Tibial artery (tissue), 4 donors: ENCODE measurements at regions of chr10 and their contacts with region 1.

Region 1: GRCh38 chr10:987870-988666 is at the start of gene GTPBP4:
- DNase-seq: peak; percentile 98
- H3K4me3 ChIP-seq: peak within 1 kb of the TSS; percentile 80 to 87
- H3K27ac ChIP-seq: peak within 1 kb of the TSS; percentile 81 to 93
- H3K4me1 ChIP-seq: peaks cover 0 to 29% (median 21%) of the 10 kb centered on the region in 4 donors
- H3K27me3 ChIP-seq: no peaks in the 10 kb centered on the region
- CTCF ChIP-seq: no peak

Region 2: GRCh38 chr10:938990-939678 is 48.9 kb before region 1 on chr10:
- intact Hi-C with region 1: no loop called
- DNase-seq: no peak
- H3K4me3 ChIP-seq: no peak overlapping the region
- H3K27ac ChIP-seq: no peak overlapping the region
- H3K4me1 ChIP-seq: no peaks in the 10 kb centered on the region
- H3K27me3 ChIP-seq: no peaks in the 10 kb centered on the region
- CTCF ChIP-seq: no peak

Region 3: GRCh38 chr10:964321-964987 is 23.6 kb before region 1 on chr10:
- intact Hi-C with region 1: no loop called
- DNase-seq: no peak
- H3K4me3 ChIP-seq: no peak overlapping the region
- H3K27ac ChIP-seq: no peak overlapping the region
- H3K4me1 ChIP-seq: no peaks in the 10 kb centered on the region
- H3K27me3 ChIP-seq: peaks cover 0 to 5% of the 10 kb centered on the region in 2 donors
- CTCF ChIP-seq: no peak

Region 4: DNA sequence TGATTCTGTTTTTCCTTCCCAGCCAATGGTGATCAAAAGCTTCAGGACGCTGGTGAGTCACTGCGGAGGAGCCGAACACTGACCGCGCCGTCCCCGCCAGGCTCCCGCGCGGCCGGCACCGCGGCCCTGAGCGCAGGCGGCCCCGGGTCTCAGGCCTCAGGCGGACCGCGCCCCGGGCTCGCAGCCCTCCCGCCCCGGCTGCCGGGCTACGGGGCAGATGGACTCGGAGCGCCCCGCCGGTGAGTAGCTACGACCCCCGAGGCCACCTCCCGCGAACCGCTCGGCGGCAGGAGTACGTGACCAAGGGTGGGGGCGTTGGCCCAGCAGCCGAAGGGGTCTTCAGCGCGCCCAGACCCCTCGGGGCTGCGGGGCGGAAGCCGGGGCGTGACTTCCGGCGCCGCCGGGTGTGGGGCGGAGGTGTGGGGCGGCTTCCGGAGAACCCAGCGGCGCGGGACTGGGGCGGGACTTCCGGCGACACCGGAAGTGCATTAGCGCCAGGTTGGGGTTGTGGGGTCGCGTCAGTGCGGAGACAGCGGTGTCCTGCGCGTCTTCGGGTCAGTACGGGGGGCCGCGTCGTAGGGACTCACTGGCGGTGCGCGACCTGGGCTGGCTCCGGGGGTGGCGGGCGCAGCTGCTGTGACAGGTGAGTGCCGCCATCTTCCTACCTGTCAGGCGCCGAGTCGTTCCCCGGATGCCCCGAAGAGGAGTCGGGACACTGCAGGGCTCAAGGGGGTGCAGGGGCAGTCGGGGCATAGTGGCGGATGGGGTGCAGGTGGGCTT is 68.4 kb after region 1 on chr10 and contains the start of gene WDR37:
- intact Hi-C with region 1: loop called (anchors 2 kb)
- DNase-seq: peak; percentile 82 to 92
- H3K4me3 ChIP-seq: peak within 1 kb of the TSS; percentile 69 to 88
- H3K27ac ChIP-seq: peak within 1 kb of the TSS; percentile 96 to 99
- H3K4me1 ChIP-seq: peaks cover 0 to 42% (median 17%) of the 10 kb centered on the region in 4 donors
- H3K27me3 ChIP-seq: no peaks in the 10 kb centered on the region
- CTCF ChIP-seq: no peak

Region 5: GRCh38 chr10:1240341-1240775 is 252.3 kb after region 1 on chr10:
- intact Hi-C with region 1: no loop called
- DNase-seq: no peak
- H3K4me3 ChIP-seq: no peak overlapping the region
- H3K27ac ChIP-seq: no peak overlapping the region
- H3K4me1 ChIP-seq: peaks cover 0 to 4% (median 0%) of the 10 kb centered on the region in 4 donors
- H3K27me3 ChIP-seq: peaks cover 0 to 29% of the 10 kb centered on the region in 2 donors
- CTCF ChIP-seq: no peak